Right lobe of liver (tissue), 6 donors: ENCODE measurements at regions of chr7 and their contacts with region 1.

Region 1: DNA sequence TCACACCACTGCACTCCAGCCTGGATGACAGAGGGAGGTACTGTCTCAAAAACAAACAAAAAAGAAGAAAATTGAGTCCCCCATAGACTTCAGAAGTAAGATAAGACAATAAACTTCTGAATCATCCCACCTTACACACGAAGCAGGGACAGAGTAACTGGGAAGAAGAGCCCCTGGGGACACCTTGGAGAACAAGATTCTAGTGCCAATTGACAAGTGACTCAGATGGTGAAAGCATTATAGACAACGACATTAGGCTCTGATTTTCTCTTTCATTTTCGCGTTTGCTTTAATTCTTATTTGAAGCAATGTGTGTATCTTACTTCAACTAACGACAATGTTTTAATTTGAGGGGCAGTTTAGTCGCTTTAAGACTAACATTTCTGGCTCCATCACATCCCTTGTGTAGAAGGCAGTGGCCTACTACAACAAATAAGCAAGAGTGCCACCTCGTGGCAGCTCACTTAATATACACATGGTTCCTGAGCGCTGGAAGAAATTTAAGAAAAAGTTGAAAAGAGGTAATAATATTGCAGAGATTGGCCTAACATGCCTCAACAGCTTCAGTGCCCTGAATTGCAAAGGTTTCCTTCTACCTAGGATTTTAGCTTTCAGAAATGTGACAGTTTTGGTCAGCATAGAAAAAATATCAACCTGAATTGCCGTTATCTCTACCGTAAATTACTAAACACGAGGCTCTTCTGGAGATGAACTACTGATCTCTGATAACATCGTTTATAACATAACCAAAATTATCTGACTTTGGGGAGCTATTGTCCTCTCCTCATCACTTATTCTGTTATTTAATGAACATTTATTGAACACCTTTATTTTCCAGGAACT is 36.7 kb downstream of the ASNS start:
- DNase-seq: peak in 2 of 3 donors; percentile 54 to 65
- ATAC-seq: peak; percentile 84 to 89 (median 86)
- H3K4me3 ChIP-seq: no peak overlapping the region
- H3K27ac ChIP-seq: no peak overlapping the region
- H3K4me1 ChIP-seq: no peaks in the 10 kb centered on the region
- H3K27me3 ChIP-seq: no peaks in the 10 kb centered on the region
- CTCF ChIP-seq: peak; percentile 58 to 77 (median 72)
- POLR2A ChIP-seq: no peak

Region 2: DNA sequence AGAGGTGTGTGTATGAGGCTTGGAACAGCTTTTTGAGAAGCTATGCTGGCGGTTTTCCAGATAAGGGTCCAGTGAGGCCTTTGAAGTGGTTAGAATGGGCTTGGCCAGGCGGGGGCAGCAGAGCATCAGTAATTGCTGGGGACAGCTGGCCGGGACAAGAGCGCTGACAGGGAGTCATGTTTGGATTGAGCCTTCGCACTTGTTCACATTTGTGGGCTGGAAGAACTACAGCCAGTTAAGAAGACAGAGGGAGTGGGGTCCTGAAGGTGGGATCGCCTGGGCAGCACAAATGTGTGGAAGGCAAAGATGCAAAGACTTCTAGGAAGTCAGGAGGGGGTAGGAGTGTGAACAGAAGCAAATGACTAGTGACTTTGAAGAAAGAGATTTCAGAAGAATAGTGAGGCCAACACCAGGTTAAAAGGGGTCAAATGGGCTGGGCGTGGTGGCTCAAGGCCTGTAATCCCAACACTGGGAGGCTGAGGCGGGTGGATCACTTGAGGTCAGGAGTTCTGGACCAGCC is 730.7 kb before region 1 on chr7:
- intact Hi-C with region 1: loop called in 1 of 2 experiments (anchors 10 kb)
- DNase-seq: peak; percentile 84 to 90 (median 86)
- ATAC-seq: peak; percentile 99 to 100 (median 99)
- H3K4me3 ChIP-seq: no peak overlapping the region
- H3K27ac ChIP-seq: no peak overlapping the region
- H3K4me1 ChIP-seq: no peaks in the 10 kb centered on the region
- H3K27me3 ChIP-seq: no peaks in the 10 kb centered on the region
- CTCF ChIP-seq: peak; percentile 78 to 90 (median 82)
- POLR2A ChIP-seq: no peak